Activated CD4-positive, alpha-beta T cell treated with anti-CD3 and anti-CD28 coated beads, Interleukin-2, amount 10 ng/mL, durations not matched to agents 7 days and 5 days (primary cell): ENCODE measurements at regions of chr10 and their contacts with region 1.

Region 1: DNA sequence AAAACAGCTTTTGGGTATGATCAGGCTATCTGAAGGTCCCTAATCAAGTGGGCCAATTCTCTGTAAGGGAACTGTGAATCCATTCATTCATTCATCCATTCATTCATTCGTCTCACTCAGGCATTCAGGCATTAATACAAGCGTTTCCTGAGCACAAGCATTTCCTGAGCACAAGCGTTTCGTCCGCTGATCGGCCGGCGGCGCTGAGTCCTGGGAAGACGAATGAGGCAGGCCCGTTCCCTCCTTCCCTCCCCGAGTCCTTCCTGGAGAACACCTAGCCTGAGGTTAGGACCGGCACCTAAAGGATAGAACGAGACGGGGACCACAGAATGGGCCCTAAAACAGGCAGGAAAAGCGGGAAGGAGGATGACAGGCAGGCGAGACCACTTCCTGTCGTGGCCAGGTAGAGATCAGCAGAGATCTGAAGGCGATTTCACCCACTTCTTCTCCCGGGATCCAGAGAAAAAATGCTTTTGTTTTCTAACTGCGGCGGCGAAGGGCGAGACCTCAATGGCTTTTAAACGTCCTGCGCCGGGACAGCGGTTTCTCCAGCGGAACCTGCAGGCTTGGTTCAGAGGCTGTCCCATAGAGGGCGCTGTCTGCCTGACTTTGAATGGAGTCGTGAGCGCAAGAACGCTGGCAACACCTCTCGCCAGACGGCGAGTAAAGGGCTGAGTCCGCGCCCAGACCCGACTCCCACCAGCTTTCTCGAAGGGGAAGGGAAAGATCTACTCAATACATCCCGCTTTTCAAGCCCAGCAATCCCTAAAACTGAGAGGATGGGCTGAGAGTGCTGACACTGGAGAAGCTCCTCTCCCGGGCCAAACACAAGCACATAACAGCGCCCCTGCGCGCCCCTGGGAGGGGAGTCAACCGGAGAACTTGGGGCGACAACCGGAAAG is 2.9 kb upstream of the HMX3 start:
- DNase-seq: peak; percentile 89
- H3K4me3 Mint-ChIP-seq: peak overlapping the region; percentile 48
- H3K27ac Mint-ChIP-seq: peak overlapping the region; percentile 83
- H3K4me1 Mint-ChIP-seq: peaks cover 25% of the 10 kb centered on the region
- H3K27me3 Mint-ChIP-seq: peaks cover 72% of the 10 kb centered on the region

Region 2: DNA sequence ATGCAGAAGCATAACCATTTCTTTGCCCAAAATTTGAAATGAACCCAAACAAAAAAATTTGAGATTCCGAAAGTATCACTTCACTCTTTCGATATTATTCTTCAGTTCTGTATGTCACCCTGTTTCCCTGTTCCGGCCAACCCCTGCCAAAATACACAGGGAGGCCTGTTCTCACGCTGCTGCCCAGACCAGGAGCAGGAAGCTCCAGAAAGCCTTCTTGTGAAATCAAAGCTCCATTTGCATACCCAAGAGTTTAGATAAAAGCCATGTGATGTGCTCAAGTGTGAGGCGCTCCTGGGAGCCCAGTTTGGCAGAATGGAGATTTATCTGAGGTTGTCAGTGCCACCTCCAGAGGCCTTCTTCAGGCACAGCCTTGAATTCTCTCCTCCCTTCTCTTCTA is 1770.8 kb before region 1 on chr10:
- CTCF ChIA-PET with region 1: no interaction called
- POLR2A ChIA-PET with region 1: no interaction called
- DNase-seq: no peak
- H3K4me3 Mint-ChIP-seq: no peak overlapping the region
- H3K27ac Mint-ChIP-seq: no peak overlapping the region
- H3K4me1 Mint-ChIP-seq: no peaks in the 10 kb centered on the region
- H3K27me3 Mint-ChIP-seq: no peaks in the 10 kb centered on the region

Region 3: DNA sequence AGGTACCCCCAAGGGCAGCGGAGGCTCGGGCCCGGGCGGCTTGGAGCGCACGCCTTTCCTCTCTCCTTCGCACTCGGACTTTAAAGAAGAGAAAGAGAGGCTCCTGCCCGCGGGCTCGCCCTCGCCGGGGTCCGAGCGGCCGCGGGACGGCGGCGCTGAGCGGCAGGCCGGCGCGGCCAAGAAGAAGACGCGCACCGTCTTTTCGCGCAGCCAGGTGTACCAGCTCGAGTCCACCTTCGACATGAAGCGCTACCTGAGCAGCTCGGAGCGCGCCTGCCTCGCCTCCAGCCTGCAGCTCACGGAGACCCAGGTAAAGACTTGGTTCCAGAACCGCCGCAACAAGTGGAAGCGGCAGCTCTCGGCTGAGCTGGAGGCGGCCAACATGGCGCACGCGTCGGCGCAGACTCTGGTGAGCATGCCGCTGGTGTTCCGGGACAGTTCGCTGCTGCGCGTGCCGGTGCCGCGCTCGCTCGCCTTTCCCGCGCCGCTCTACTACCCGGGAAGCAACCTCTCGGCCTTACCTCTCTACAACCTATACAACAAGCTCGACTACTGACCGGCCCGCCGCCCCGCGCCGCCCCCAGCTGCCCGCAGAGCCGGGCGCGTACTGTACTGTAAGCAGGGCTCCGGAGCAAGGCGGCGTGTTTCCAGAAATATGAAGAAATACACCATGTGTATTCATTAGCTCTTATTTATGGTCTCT is 16.9 kb after region 1 on chr10:
- CTCF ChIA-PET with region 1: interaction called, 11 read pairs
- POLR2A ChIA-PET with region 1: no interaction called
- DNase-seq: peak; percentile 40
- H3K4me3 Mint-ChIP-seq: peak overlapping the region; percentile 62
- H3K27ac Mint-ChIP-seq: peak overlapping the region; percentile 31
- H3K4me1 Mint-ChIP-seq: peaks cover 57% of the 10 kb centered on the region
- H3K27me3 Mint-ChIP-seq: peaks cover 61% of the 10 kb centered on the region